ENCODE measurements at regions of chr13 and their contacts with region 1.

Region 1: GRCh38 chr13:36282818-36283445 is 14.7 kb downstream of the CCDC169 start:
- DNase-seq: no peak
- H3K4me3 ChIP-seq: no peak overlapping the region
- H3K27ac ChIP-seq: no peak overlapping the region
- H3K4me1 ChIP-seq: no peaks in the 10 kb centered on the region
- H3K27me3 ChIP-seq: no peaks in the 10 kb centered on the region
- CTCF ChIP-seq: peak; percentile 41 to 69 (median 68)
- EP300 ChIP-seq: no peak
- POLR2A ChIP-seq: no peak

Region 2: GRCh38 chr13:36183901-36184300 is 99.0 kb before region 1 on chr13:
- intact Hi-C with region 1: no loop called
- DNase-seq: no peak
- H3K4me3 ChIP-seq: no peak overlapping the region
- H3K27ac ChIP-seq: no peak overlapping the region
- H3K4me1 ChIP-seq: no peaks in the 10 kb centered on the region
- H3K27me3 ChIP-seq: no peaks in the 10 kb centered on the region
- CTCF ChIP-seq: no peak
- EP300 ChIP-seq: no peak
- POLR2A ChIP-seq: no peak

Region 3: DNA sequence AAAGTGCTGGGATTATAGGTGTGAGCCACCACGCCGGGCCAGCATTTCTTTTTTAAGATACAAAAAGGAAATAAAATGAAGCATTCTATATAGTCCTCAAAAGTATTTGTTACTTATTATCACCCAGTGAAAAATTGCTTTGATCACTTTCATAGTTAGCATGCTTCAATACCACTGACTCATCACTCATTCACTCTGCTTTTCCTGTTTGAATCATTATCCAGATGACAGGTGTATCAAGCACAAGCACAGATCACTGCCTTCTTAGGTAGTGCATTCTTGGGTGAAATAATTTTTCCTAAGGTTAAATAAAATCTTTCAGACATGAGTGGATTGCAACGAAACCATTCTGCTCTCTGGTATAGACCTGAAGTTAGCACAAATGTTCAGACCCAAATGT is 99.1 kb after region 1 on chr13:
- intact Hi-C with region 1: loop called in 1 of 4 experiments (anchors 10 kb)
- DNase-seq: no peak
- H3K4me3 ChIP-seq: no peak overlapping the region
- H3K27ac ChIP-seq: no peak overlapping the region
- H3K4me1 ChIP-seq: no peaks in the 10 kb centered on the region
- H3K27me3 ChIP-seq: no peaks in the 10 kb centered on the region
- CTCF ChIP-seq: no peak
- EP300 ChIP-seq: no peak
- POLR2A ChIP-seq: no peak

Region 4: DNA sequence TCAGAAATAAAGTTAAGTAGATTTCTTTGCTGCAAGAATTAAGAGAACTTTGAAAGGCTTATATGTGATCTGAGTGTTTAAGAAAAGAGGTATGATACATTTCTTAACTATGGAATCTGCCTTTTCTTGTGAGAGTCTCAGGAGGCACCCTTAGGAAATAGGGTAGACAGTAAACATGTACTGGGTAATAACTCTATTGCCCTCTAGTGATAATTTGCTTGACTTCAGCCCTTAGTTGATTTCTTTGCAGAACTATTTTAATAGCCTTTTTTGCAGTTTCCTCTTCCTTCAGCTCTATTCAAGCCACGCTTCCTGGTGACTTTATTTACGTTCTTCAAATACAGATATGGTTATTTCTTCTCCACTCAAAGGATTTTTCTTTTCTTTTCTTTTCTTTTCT is 112.3 kb after region 1 on chr13:
- intact Hi-C with region 1: loop called in 1 of 4 experiments (anchors 10 kb)
- DNase-seq: no peak
- H3K4me3 ChIP-seq: no peak overlapping the region
- H3K27ac ChIP-seq: no peak overlapping the region
- H3K4me1 ChIP-seq: no peaks in the 10 kb centered on the region
- H3K27me3 ChIP-seq: no peaks in the 10 kb centered on the region
- CTCF ChIP-seq: peak in 2 of 3 donors; percentile 27 to 46
- EP300 ChIP-seq: no peak
- POLR2A ChIP-seq: no peak

Region 5: DNA sequence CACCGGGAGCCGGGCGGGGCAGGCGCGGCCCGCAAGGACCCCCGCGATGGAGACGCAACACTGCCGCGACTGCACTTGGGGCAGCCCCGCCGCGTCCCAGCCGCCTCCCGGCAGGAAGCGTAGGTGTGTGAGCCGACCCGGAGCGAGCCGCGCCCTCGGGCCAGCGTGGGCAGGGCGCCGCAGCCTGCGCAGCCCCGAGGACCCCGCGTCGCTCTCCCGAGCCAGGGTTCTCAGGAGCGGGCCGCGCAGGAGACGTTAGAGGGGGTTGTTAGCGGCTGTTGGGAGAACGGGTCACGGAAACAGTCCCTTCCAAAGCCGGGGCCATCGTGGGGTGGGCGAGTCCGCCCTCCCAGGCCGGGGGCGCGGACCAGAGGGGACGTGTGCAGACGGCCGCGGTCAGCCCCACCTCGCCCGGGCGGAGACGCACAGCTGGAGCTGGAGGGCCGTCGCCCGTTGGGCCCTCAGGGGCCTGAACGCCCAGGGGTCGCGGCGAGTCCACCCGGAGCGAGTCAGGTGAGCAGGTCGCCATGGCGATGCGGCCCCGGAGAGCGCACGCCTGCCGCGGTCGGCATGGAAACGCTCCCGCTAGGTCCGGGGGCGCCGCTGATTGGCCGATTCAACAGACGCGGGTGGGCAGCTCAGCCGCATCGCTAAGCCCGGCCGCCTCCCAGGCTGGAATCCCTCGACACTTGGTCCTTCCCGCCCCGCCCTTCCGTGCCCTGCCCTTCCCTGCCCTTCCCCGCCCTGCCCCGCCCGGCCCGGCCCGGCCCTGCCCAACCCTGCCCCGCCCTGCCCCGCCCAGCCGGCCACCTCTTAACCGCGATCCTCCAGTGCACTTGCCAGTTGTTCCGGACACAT is 149.0 kb after region 1 on chr13 and contains the start of gene CCNA1:
- intact Hi-C with region 1: no loop called
- DNase-seq: peak in 3 of 5 donors; percentile 24 to 52 (median 52)
- H3K4me3 ChIP-seq: peak within 1 kb of the TSS; percentile 44
- H3K27ac ChIP-seq: no peak within 1 kb of the TSS
- H3K4me1 ChIP-seq: peaks cover 12% of the 10 kb centered on the region
- H3K27me3 ChIP-seq: no peaks in the 10 kb centered on the region
- CTCF ChIP-seq: no peak
- EP300 ChIP-seq: no peak
- POLR2A ChIP-seq: no peak
- total RNA-seq, gene CCNA1: 0.24 to 12.5 (median 1.6) TPM in 5 of 7 donors, not detected in the others

Region 6: GRCh38 chr13:36736119-36736726 is 453.3 kb after region 1 on chr13:
- intact Hi-C with region 1: loop called in 3 of 4 experiments (anchors 5 to 10 kb)
- DNase-seq: peak in 4 of 5 donors; percentile 23 to 58 (median 45)
- H3K4me3 ChIP-seq: no peak overlapping the region
- H3K27ac ChIP-seq: no peak overlapping the region
- H3K4me1 ChIP-seq: no peaks in the 10 kb centered on the region
- H3K27me3 ChIP-seq: no peaks in the 10 kb centered on the region
- CTCF ChIP-seq: peak; percentile 31 to 53 (median 36)
- EP300 ChIP-seq: no peak
- POLR2A ChIP-seq: no peak

Measured in ovary (tissue), 10 donors.